CD4-positive, alpha-beta memory T cell (primary cell): ENCODE measurements at regions of chr10 and their contacts with region 1.

Region 1: GRCh38 chr10:110803830-110804338 is 67.8 kb upstream of the PDCD4 start:
- DNase-seq: peak in 3 of 5 donors; percentile 20 to 35 (median 31)
- H3K4me3 ChIP-seq: peak overlapping the region in 1 of 2 donors; percentile 4
- H3K4me3 Mint-ChIP-seq: peak overlapping the region in 7 of 8 donors; percentile 51 to 81 (median 70)
- H3K27ac ChIP-seq: peak overlapping the region; percentile 10
- H3K27ac Mint-ChIP-seq: peak overlapping the region; percentile 78 to 98 (median 91)
- H3K4me1 ChIP-seq: peaks cover 36% of the 10 kb centered on the region
- H3K4me1 Mint-ChIP-seq: peaks cover 30 to 57% (median 45%) of the 10 kb centered on the region in 4 donors
- H3K27me3 ChIP-seq: no peaks in the 10 kb centered on the region
- H3K27me3 Mint-ChIP-seq: no peaks in the 10 kb centered on the region

Region 2: GRCh38 chr10:110746254-110746826 is 57.5 kb before region 1 on chr10:
- CTCF ChIA-PET with region 1: interaction called, 11 read pairs
- POLR2A ChIA-PET with region 1: interaction called, 6 read pairs
- intact Hi-C with region 1: loop called (anchors 2 kb)
- DNase-seq: peak in 4 of 5 donors; percentile 44 to 58 (median 50)
- H3K4me3 ChIP-seq: no peak overlapping the region
- H3K4me3 Mint-ChIP-seq: peak overlapping the region in 1 of 8 donors; percentile 23
- H3K27ac ChIP-seq: no peak overlapping the region
- H3K27ac Mint-ChIP-seq: peak overlapping the region in 6 of 7 donors; percentile 20 to 71 (median 42)
- H3K4me1 ChIP-seq: peaks cover 47% of the 10 kb centered on the region
- H3K4me1 Mint-ChIP-seq: peaks cover 42 to 72% (median 56%) of the 10 kb centered on the region in 4 donors
- H3K27me3 ChIP-seq: no peaks in the 10 kb centered on the region
- H3K27me3 Mint-ChIP-seq: no peaks in the 10 kb centered on the region

Region 3: DNA sequence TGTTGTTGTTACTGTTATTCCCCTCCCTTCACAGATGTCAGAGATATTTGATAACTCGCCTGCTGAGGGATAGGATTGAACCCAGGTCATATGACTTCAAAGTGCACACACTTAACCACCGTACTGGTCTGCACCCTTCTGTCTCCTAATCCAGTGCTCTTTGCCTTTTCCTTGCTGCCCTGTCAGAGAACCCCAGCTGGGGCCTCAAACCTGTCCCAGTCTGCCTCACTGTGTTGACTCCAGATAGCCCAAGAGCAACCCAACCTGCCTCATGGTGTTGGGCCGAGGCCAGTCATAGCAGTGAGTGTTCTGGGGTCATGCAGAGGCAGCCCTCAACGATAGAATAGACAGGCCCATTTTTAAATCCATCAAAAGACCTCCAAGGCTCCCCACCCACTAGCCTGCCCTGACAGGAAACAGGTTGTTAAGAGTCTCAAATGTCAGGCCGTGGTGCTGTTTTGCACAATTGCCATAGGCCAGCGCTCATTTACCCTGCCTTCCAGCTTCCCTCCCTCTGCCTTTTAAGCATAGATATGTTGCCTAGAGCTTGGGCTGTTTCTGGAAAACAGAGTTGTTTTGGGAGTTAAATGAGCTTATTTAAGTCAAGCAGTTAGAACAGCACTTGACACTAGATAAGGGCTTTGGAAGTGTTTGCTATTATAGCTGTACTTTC is 30.9 kb after region 1 on chr10:
- CTCF ChIA-PET with region 1: interaction called, 10 read pairs
- POLR2A ChIA-PET with region 1: interaction called, 5 read pairs
- intact Hi-C with region 1: no loop called
- DNase-seq: peak in 2 of 5 donors; percentile 19 to 24
- H3K4me3 ChIP-seq: no peak overlapping the region
- H3K4me3 Mint-ChIP-seq: peak overlapping the region in 3 of 8 donors; percentile 0 to 26 (median 17)
- H3K27ac ChIP-seq: no peak overlapping the region
- H3K27ac Mint-ChIP-seq: peak overlapping the region in 6 of 7 donors; percentile 44 to 82 (median 62)
- H3K4me1 ChIP-seq: peaks cover 26% of the 10 kb centered on the region
- H3K4me1 Mint-ChIP-seq: peaks cover 5 to 29% (median 15%) of the 10 kb centered on the region in 4 donors
- H3K27me3 ChIP-seq: no peaks in the 10 kb centered on the region
- H3K27me3 Mint-ChIP-seq: no peaks in the 10 kb centered on the region

Region 4: DNA sequence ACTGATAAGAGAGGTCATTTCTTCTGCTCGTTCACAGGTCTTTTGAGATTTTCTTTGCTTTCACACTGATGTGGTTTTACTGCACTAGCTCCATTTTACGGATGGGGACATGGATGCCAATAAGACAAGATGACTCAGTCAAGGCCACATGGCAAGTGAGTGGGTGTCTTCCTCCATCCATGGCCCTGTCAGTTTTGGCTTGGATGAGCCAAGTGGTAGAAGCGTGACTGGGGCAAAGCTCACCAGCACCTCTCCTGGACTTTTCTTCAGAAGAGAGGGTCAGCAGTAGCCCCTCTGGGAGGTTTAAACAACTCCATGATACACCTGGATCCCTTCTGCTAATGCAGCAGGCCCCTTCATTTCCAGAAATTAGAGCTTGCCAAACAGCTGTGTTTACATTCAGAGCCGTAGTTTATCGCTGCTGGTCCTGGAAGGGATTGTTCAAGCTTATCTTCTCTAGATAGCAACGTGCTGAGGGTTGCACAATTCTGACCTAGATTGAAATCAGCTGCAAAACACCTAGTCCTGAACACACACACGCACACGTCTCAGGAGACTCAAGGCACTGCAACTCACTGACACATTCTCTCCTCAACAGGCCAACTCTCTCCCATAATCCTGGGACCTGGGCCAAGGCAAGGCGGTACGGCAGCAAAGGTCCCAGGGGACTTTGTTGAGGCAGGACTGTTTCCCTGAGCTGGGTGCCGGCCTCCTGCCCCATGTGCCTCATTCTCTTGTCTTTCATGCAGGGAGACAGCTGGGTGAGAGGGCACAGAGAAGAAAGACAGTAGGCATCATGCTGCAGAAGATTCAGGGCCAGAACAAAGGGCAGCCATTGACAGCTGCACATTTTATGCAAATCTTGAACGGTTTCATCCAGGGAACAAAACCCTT is 53.6 kb after region 1 on chr10:
- CTCF ChIA-PET with region 1: interaction called, 59 read pairs
- POLR2A ChIA-PET with region 1: interaction called, 91 read pairs
- intact Hi-C with region 1: no loop called
- DNase-seq: peak in 4 of 5 donors; percentile 51 to 71 (median 56)
- H3K4me3 ChIP-seq: no peak overlapping the region
- H3K4me3 Mint-ChIP-seq: peak overlapping the region in 7 of 8 donors; percentile 53 to 89 (median 72)
- H3K27ac ChIP-seq: peak overlapping the region; percentile 57
- H3K27ac Mint-ChIP-seq: peak overlapping the region; percentile 91 to 99 (median 97)
- H3K4me1 ChIP-seq: peaks cover 91% of the 10 kb centered on the region
- H3K4me1 Mint-ChIP-seq: peaks cover 67 to 92% (median 79%) of the 10 kb centered on the region in 4 donors
- H3K27me3 ChIP-seq: no peaks in the 10 kb centered on the region
- H3K27me3 Mint-ChIP-seq: no peaks in the 10 kb centered on the region

Region 5: DNA sequence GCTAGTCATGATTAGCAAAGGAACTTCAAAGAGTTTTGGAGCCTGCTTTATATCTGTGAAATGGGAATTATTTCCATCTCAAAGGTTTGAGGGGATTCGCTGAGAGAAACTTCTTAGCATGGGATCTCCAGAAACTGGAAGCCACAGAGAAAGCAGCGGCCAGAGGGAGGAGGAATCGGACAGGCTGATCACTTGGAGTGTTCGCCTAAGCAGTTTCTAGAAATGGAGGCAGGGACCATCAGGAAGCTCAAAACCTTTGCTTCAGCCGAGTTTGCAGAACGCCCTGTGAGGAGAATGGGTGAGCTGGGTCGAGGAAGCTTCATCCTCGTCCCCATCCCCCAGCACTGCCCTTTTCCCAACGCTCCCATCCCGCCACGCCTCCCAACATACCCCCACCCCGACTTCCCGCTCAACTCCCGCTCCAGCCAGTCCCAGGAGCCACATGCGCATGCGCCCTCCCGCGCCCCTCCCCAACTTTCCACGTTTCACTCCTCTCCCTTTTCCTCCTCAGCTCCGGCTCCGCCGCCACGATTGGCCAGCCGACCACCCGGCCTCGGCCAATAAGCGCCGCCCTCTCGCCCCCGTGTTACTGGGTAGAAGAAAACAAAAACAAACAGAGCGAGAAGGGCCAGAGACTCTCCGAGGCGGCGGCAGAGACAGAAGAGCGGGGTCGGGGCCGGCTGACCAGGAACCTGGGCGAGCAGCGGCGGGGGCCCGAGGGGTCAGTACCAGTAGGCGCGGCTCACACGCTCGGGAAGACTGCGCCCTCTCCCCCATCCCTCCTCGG is 67.6 kb after region 1 on chr10 and contains the start of gene PDCD4:
- CTCF ChIA-PET with region 1: interaction called, 29 read pairs
- POLR2A ChIA-PET with region 1: interaction called, 78 read pairs
- intact Hi-C with region 1: loop called (anchors 1 kb)
- DNase-seq: peak; percentile 89 to 96 (median 92)
- H3K4me3 ChIP-seq: peak within 1 kb of the TSS; percentile 67 to 95
- H3K4me3 Mint-ChIP-seq: peak within 1 kb of the TSS; percentile 96 to 99 (median 96)
- H3K27ac ChIP-seq: peak within 1 kb of the TSS; percentile 98
- H3K27ac Mint-ChIP-seq: peak within 1 kb of the TSS; percentile 91 to 100 (median 99)
- H3K4me1 ChIP-seq: peaks cover 78% of the 10 kb centered on the region
- H3K4me1 Mint-ChIP-seq: peaks cover 44 to 86% (median 62%) of the 10 kb centered on the region in 4 donors
- H3K27me3 ChIP-seq: no peaks in the 10 kb centered on the region
- H3K27me3 Mint-ChIP-seq: no peaks in the 10 kb centered on the region
- total RNA-seq, gene PDCD4: 358 to 376 TPM

Region 6: GRCh38 chr10:110893559-110894179 is 89.8 kb after region 1 on chr10:
- CTCF ChIA-PET with region 1: interaction called, 72 read pairs
- POLR2A ChIA-PET with region 1: interaction called, 15 read pairs
- intact Hi-C with region 1: loop called (anchors 1 kb)
- DNase-seq: peak in 4 of 5 donors; percentile 60 to 66 (median 64)
- H3K4me3 ChIP-seq: no peak overlapping the region
- H3K4me3 Mint-ChIP-seq: no peak overlapping the region
- H3K27ac ChIP-seq: peak overlapping the region; percentile 6
- H3K27ac Mint-ChIP-seq: peak overlapping the region in 4 of 7 donors; percentile 0 to 43 (median 36)
- H3K4me1 ChIP-seq: peaks cover 49% of the 10 kb centered on the region
- H3K4me1 Mint-ChIP-seq: peaks cover 28 to 64% (median 50%) of the 10 kb centered on the region in 4 donors
- H3K27me3 ChIP-seq: no peaks in the 10 kb centered on the region
- H3K27me3 Mint-ChIP-seq: no peaks in the 10 kb centered on the region

Region 7: DNA sequence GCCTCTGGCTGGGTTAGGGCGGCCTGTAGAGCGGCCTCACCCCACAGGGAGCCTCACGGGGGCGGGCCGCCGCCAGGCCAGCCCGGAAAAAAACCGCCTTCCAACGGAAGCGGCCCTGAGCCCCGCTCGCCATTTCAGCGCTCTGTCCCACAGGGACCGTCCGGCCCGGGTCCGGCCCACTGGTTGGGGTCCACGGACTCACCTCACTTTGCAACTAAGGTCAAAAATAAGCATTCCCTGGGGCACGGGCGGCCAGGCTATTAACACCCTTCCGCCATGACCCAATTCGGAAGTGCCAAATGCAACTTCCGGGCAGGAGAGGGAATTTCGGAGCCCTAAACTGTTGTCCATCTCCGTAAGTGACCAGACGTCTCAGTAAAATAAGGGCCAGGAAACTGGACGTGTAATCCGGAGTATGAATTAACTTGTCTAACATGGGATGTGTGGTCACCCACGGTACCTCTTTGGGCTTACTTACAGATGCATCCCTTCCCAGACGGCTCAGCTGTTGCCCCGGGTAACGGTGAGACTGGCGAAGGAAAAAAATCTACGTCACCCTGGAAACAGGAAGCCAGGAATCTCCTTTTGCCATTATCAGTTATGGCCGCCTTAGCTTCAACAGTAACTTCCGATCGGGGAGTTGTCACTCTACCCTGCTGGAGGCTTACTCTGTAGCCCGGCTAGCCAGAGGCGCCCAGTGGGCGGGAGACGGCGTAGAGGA is 114.9 kb after region 1 on chr10 and contains the start of gene BBIP1:
- CTCF ChIA-PET with region 1: interaction called, 3 read pairs
- POLR2A ChIA-PET with region 1: interaction called, 11 read pairs
- intact Hi-C with region 1: loop called (anchors 1 kb)
- DNase-seq: peak in 1 of 5 donors; percentile 96
- H3K4me3 ChIP-seq: peak within 1 kb of the TSS; percentile 85 to 99
- H3K4me3 Mint-ChIP-seq: peak within 1 kb of the TSS; percentile 92 to 99 (median 98)
- H3K27ac ChIP-seq: peak within 1 kb of the TSS; percentile 99
- H3K27ac Mint-ChIP-seq: peak within 1 kb of the TSS; percentile 98 to 100 (median 100)
- H3K4me1 ChIP-seq: peaks cover 43% of the 10 kb centered on the region
- H3K4me1 Mint-ChIP-seq: peaks cover 27 to 64% (median 35%) of the 10 kb centered on the region in 4 donors
- H3K27me3 ChIP-seq: no peaks in the 10 kb centered on the region
- H3K27me3 Mint-ChIP-seq: no peaks in the 10 kb centered on the region
- total RNA-seq, gene BBIP1: 42.9 to 46.8 TPM